MCF 10A (cell line): ENCODE measurements at regions of chr7 and their contacts with region 1.

Region 1: DNA sequence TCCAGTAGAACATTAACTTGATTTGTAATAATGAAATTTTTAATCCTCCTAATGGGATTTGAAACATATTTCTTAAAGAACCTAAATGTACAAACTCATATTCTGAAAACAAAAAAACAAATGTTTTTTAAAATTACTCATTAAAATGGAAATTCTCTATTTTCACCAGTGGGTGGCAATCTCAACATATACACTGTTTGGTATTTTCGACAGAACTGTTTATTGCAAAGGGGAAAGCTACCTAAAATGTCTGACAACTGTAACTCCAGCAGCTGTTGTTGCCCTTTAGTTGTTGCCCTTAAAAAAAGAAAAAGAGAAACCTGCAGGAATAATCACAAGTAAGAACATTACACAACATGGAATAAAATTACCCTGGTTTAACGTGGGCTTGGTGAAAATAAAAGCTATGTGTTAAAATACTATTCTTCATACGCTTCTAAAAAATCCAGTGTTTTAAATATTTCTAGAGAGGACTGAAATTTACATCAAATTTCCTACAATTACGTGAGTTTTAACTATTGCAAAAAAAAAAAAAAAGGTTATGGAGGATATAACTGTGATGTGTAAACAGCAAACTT is 54.5 kb downstream of the COL1A2 start:
- DNase-seq: peak; percentile 47
- H3K4me3 Mint-ChIP-seq: no peak overlapping the region
- H3K27ac Mint-ChIP-seq: no peak overlapping the region
- H3K4me1 Mint-ChIP-seq: no peaks in the 10 kb centered on the region
- H3K27me3 Mint-ChIP-seq: peaks cover 15% of the 10 kb centered on the region
- CTCF ChIP-seq: peak; percentile 52

Region 2: GRCh38 chr7:94348142-94348541 is 101.1 kb before region 1 on chr7:
- CTCF ChIA-PET with region 1: no interaction called
- POLR2A ChIA-PET with region 1: no interaction called
- intact Hi-C with region 1: no loop called
- DNase-seq: peak; percentile 9
- H3K4me3 Mint-ChIP-seq: no peak overlapping the region
- H3K27ac Mint-ChIP-seq: no peak overlapping the region
- H3K4me1 Mint-ChIP-seq: peaks cover 4% of the 10 kb centered on the region
- H3K27me3 Mint-ChIP-seq: no peaks in the 10 kb centered on the region
- CTCF ChIP-seq: no peak

Region 3: DNA sequence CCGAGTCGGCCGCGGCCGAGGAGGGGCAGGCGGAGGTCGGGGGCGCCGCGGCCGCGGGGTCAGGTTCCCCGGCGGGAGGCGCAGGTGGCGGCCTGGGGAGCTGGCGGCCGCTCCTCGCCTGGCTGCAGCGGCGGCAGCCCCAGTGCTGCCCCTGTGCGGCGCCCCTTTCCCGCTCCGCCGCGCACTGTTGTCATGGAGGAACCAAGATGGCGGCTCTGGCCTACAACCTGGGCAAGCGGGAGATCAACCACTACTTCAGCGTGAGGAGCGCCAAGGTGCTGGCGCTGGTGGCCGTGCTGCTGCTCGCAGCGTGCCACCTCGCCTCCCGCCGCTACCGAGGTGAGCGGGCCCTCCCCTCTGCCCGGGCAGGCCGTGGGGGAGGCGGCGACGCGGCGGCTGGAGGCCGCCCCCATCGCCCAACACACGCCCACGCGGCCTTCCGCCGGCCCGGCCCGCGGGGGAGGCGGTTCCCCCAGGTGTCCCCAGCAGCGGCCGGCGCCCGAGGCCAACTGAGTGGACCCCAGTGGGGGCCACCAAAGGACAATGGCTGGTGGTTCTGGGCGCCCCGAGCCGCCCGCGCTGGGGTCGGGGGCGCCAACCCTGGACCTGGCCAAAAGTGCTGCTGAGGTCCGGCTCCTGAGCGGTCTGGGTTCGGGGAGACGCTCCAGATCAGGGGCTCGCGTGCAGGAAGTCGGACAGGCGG is 60.8 kb after region 1 on chr7:
- CTCF ChIA-PET with region 1: interaction called, 15 read pairs
- POLR2A ChIA-PET with region 1: interaction called, 3 read pairs
- intact Hi-C with region 1: no loop called
- DNase-seq: peak; percentile 65
- H3K4me3 Mint-ChIP-seq: peak overlapping the region; percentile 69
- H3K27ac Mint-ChIP-seq: peak overlapping the region; percentile 43
- H3K4me1 Mint-ChIP-seq: peaks cover 32% of the 10 kb centered on the region
- H3K27me3 Mint-ChIP-seq: no peaks in the 10 kb centered on the region
- CTCF ChIP-seq: no peak

Region 4: DNA sequence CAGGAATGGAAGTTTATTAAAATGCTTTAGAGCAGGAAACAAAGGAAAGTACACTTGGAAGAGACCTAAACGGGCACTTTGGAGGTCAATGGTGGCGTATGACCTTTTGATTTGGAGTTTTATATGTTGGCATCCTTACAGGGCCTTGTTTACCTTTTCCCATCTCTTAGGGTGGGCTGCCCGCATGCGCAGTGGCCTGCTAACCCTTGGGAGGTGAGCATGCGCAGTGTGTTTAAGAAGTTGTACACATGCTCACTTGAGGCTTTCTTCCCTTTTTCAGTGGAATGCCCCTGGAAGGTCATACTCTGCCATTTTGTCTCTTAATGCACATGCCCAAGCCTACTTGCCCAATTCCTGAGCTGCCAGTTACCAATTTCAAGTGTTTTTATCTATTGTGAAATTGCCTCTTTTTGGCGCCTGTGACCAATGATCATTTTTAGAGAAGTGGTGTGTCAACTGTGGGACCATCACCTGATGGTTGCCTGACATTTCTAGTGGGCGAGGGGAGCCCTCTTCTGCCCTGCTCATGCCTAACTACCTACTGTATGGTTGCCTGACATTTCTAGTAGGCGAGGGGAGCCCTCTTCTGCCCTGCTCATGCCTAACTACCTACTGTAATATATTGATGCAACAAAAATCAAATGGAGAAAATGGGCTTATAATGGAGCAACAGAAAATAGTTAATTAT is 596.1 kb after region 1 on chr7:
- CTCF ChIA-PET with region 1: interaction called, 8 read pairs
- POLR2A ChIA-PET with region 1: interaction called, 3 read pairs
- intact Hi-C with region 1: loop called (anchors 1 kb)
- DNase-seq: peak; percentile 45
- H3K4me3 Mint-ChIP-seq: no peak overlapping the region
- H3K27ac Mint-ChIP-seq: no peak overlapping the region
- H3K4me1 Mint-ChIP-seq: no peaks in the 10 kb centered on the region
- H3K27me3 Mint-ChIP-seq: no peaks in the 10 kb centered on the region
- CTCF ChIP-seq: peak; percentile 23

Region 5: DNA sequence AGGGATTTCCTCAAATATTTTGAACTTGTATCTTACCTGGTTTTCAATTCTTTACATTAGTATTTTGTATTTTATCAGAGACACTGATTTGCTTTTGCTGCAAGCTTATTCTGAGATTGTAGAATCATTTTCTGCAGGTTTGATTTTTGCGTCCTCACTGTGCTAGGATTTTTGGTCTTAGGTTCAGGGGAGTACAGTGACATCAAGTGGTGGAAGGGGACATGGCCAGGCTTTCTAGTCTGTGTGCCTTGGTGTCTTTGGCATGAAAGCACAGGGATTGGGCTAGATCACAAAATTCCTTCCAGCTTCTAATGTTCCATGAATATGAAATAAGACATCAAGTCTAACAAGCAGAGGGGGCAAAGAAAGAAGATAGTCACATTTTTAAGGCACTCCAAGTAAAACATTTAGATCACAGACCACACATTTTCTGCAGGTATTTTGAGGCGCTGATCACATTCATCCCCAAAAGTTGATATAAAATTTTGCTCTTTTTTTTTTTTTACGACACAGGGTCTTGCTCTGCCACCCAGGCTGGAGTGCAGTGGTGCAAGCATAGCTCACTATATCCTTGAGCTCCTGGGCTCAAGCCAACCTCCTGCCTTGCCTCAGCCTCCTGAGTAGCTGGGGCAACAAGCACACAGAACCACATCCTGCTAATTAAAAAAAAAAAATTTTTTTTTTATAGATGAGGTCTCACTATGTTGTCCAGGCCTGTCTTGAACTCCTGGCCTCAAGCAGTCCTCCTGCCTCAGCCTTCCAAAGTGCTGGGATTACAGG is 750.7 kb after region 1 on chr7:
- CTCF ChIA-PET with region 1: interaction called, 81 read pairs
- POLR2A ChIA-PET with region 1: interaction called, 4 read pairs
- intact Hi-C with region 1: loop called (anchors 1 kb)
- DNase-seq: peak; percentile 68
- H3K4me3 Mint-ChIP-seq: no peak overlapping the region
- H3K27ac Mint-ChIP-seq: no peak overlapping the region
- H3K4me1 Mint-ChIP-seq: no peaks in the 10 kb centered on the region
- H3K27me3 Mint-ChIP-seq: peaks cover 17% of the 10 kb centered on the region
- CTCF ChIP-seq: peak; percentile 48

Region 6: GRCh38 chr7:95246831-95247370 is 797.7 kb after region 1 on chr7:
- CTCF ChIA-PET with region 1: interaction called, 19 read pairs
- POLR2A ChIA-PET with region 1: interaction called, 4 read pairs
- intact Hi-C with region 1: loop called (anchors 1 kb)
- DNase-seq: peak; percentile 79
- H3K4me3 Mint-ChIP-seq: no peak overlapping the region
- H3K27ac Mint-ChIP-seq: no peak overlapping the region
- H3K4me1 Mint-ChIP-seq: no peaks in the 10 kb centered on the region
- H3K27me3 Mint-ChIP-seq: no peaks in the 10 kb centered on the region
- CTCF ChIP-seq: peak; percentile 65